GM23248 (cell line): ENCODE measurements at regions of chr11 and their contacts with region 1.

Region 1: DNA sequence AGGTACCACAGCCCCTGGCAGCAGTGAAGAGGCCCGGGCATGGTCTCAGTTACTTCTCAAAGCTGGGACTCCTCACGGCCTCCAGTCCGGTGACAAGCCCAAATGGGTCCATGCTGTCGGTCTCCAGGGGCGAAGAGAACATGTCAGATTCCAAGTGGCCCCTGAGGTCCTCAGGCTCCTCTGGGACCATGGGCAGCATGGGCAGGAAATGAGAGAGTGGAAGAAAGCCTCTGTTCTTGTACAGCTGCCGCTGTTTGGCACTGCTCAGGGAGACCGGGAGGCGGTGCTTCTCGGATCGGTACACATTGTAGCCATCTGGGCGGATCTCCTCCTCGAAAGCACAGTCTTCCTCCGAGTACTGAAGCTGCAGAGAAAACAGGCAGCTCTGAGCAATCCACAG is 4.6 kb downstream of the FGF19 start:
- DNase-seq: peak; percentile 44
- H3K4me3 ChIP-seq: no peak overlapping the region
- H3K27ac ChIP-seq: no peak overlapping the region
- H3K4me1 ChIP-seq: no peaks in the 10 kb centered on the region
- H3K27me3 ChIP-seq: peaks cover 65% of the 10 kb centered on the region

Region 2: GRCh38 chr11:69311767-69312385 is 387.3 kb before region 1 on chr11:
- in situ Hi-C with region 1: no loop called
- DNase-seq: no peak
- H3K4me3 ChIP-seq: no peak overlapping the region
- H3K27ac ChIP-seq: no peak overlapping the region
- H3K4me1 ChIP-seq: peaks cover 6% of the 10 kb centered on the region; the same call in 1 of the 2 replicates
- H3K27me3 ChIP-seq: no peaks in the 10 kb centered on the region

Region 3: GRCh38 chr11:69874984-69875624 is 175.9 kb after region 1 on chr11:
- in situ Hi-C with region 1: loop called (anchors 10 kb)
- DNase-seq: no peak
- H3K4me3 ChIP-seq: no peak overlapping the region
- H3K27ac ChIP-seq: no peak overlapping the region
- H3K4me1 ChIP-seq: no peaks in the 10 kb centered on the region
- H3K27me3 ChIP-seq: peaks cover 26% of the 10 kb centered on the region